Activated CD8-positive, alpha-beta T cell treated with anti-CD3 and anti-CD28 coated beads for 36 hours (primary cell): ENCODE measurements at regions of chr20 and their contacts with region 1.

Region 1: DNA sequence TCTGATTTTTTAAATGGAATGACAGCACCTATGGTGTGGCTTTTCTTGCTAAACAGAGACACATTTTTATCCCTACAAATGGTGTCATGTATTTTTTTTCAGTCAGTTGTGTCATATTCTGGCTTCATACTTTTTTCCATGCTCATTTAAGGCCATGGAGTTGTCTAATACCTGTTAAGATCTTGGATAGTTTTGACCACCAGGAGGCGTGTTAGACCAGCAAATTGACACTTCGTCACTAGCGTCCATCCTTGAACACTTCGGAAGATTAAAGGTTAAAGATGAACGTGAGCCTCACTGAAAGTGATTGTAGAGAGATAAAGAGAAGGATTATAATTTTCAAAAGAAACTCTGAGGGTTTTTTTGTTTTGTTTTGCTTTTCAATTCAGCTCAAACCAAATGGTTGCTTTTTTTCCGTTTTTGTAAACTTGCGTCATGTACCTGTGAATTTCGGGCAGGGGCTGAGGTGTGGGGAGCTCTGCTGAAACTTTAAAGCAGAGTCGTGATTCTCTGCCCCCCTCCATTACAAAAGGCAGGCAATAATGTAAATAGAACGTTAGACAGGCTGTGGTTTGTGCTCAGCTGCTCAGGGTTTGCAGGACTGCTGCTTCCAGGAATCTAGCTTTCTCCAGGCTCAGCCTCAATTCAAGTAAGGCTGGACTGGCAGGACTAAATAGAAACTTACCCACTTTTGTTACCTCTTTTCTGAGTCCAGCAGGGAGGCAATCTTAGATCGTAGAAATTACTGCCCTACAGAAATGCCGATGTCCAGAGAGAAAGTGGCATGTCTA is 245.1 kb downstream of the FOXA2 start:
- DNase-seq: peak; percentile 66
- ATAC-seq: peak; percentile 60
- H3K4me3 Mint-ChIP-seq: no peak overlapping the region
- H3K27ac Mint-ChIP-seq: no peak overlapping the region
- H3K4me1 Mint-ChIP-seq: no peaks in the 10 kb centered on the region
- H3K27me3 Mint-ChIP-seq: peaks cover 6% of the 10 kb centered on the region
- CTCF ChIP-seq: peak; percentile 86

Region 2: GRCh38 chr20:22217712-22218352 is 121.5 kb before region 1 on chr20:
- CTCF ChIA-PET with region 1: no interaction called
- POLR2A ChIA-PET with region 1: no interaction called
- intact Hi-C with region 1: no loop called
- DNase-seq: no peak
- ATAC-seq: no peak
- H3K4me3 Mint-ChIP-seq: no peak overlapping the region
- H3K27ac Mint-ChIP-seq: no peak overlapping the region
- H3K4me1 Mint-ChIP-seq: no peaks in the 10 kb centered on the region
- H3K27me3 Mint-ChIP-seq: no peaks in the 10 kb centered on the region
- CTCF ChIP-seq: no peak

Region 3: DNA sequence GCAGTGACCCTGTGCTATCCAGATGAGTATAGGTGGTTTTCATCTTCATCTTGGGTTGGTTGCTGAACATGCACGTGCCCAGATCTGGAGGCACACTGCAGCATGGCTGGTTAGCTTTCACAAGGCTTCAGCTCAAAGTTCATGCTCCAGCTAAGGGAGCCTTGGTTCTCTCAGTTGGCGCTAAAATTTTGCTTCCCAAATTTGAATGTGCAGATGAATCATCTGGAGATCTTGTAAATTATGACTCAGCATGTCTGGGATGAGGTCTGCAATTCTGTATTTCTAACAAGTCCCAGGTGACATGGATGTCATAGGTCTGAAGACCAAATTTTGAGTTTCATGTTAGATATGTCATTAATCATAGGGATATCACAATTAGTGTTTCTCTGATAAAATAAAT is 14.3 kb after region 1 on chr20:
- CTCF ChIA-PET with region 1: interaction called, 24 read pairs
- POLR2A ChIA-PET with region 1: no interaction called
- intact Hi-C with region 1: no loop called
- DNase-seq: no peak
- ATAC-seq: no peak
- H3K4me3 Mint-ChIP-seq: no peak overlapping the region
- H3K27ac Mint-ChIP-seq: no peak overlapping the region
- H3K4me1 Mint-ChIP-seq: no peaks in the 10 kb centered on the region
- H3K27me3 Mint-ChIP-seq: peaks cover 1% of the 10 kb centered on the region
- CTCF ChIP-seq: no peak

Region 4: DNA sequence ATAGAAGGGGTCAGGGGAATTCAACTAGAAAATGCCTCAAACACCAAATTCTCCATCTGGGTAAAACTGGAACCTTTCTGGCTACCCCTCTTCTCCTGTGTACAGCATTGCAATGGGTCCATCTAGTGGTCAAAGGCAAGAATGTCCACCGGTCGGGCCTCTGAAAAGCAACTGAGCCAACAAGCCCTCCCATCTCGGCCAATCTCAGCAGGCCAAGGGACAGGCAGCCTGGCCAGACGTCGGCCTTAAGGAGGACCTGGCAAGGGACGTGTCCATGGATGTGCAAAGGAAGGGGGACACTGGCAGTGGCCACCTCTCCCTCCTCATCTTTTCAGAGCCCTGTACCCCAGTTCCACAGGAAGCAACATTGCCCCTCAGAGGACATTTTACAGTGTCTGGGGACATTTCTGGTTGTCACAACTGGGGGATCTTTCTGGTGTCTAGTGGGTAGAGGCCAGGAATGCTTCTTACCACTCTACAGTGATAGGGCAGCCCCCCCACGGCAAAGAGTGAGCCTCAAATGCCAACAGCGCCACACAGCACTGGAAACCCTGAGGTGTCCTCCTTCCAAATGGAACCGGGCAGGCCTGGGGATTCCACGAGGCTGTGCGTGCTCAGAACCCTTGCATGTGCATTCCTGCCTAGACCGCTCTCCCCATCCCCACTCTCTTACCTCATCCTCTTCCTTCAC is 344.9 kb after region 1 on chr20:
- CTCF ChIA-PET with region 1: interaction called, 40 read pairs
- POLR2A ChIA-PET with region 1: no interaction called
- intact Hi-C with region 1: loop called (anchors 5 kb)
- DNase-seq: peak; percentile 60
- ATAC-seq: peak; percentile 66
- H3K4me3 Mint-ChIP-seq: no peak overlapping the region
- H3K27ac Mint-ChIP-seq: no peak overlapping the region
- H3K4me1 Mint-ChIP-seq: no peaks in the 10 kb centered on the region
- H3K27me3 Mint-ChIP-seq: peaks cover 2% of the 10 kb centered on the region
- CTCF ChIP-seq: peak; percentile 72

Region 5: GRCh38 chr20:22825076-22825475 is 485.8 kb after region 1 on chr20:
- CTCF ChIA-PET with region 1: no interaction called
- POLR2A ChIA-PET with region 1: no interaction called
- intact Hi-C with region 1: no loop called
- DNase-seq: no peak
- ATAC-seq: no peak
- H3K4me3 Mint-ChIP-seq: no peak overlapping the region
- H3K27ac Mint-ChIP-seq: no peak overlapping the region
- H3K4me1 Mint-ChIP-seq: no peaks in the 10 kb centered on the region
- H3K27me3 Mint-ChIP-seq: no peaks in the 10 kb centered on the region
- CTCF ChIP-seq: no peak